Right ventricle myocardium superior (tissue), 1 donor: ENCODE measurements at regions of chr10 and their contacts with region 1.

Region 1: DNA sequence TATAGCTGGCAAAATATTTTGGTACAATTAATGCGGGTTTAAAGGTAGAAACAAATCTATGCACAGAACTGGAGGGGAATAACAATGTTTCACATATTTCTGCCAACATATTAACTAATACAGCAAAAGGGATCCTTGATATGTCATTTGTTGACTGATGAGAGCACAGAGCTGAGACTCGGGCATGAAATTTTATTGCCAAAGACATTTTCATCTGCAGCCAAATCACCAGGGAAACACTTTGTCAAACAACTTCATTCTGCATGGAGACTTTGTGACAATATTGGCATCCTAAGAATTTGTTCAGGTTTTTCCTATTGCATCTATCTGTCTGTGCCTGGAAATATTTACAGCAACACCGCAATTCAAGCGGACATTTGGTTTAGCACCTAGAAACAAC is 117.8 kb upstream of the C1QL3 start:
- DNase-seq: no peak
- ATAC-seq: peak; percentile 49

Region 2: GRCh38 chr10:16765509-16766375 is 126.3 kb after region 1 on chr10:
- intact Hi-C with region 1: loop called (anchors 10 kb)
- DNase-seq: no peak
- ATAC-seq: no peak